Right cardiac atrium (tissue), 5 donors: ENCODE measurements at regions of chr22 and their contacts with region 1.

Region 1: GRCh38 chr22:37519268-37520195 is at the start of gene CARD10:
- DNase-seq: peak in 2 of 3 donors; percentile 75 to 81
- ATAC-seq: peak; percentile 58 to 69
- H3K4me3 ChIP-seq: peak within 1 kb of the TSS; percentile 60
- H3K27ac ChIP-seq: peak within 1 kb of the TSS; percentile 19
- H3K4me1 ChIP-seq: no peaks in the 10 kb centered on the region
- H3K27me3 ChIP-seq: no peaks in the 10 kb centered on the region
- total RNA-seq, gene CARD10: 6.6 to 11.4 (median 9.6) TPM

Region 2: DNA sequence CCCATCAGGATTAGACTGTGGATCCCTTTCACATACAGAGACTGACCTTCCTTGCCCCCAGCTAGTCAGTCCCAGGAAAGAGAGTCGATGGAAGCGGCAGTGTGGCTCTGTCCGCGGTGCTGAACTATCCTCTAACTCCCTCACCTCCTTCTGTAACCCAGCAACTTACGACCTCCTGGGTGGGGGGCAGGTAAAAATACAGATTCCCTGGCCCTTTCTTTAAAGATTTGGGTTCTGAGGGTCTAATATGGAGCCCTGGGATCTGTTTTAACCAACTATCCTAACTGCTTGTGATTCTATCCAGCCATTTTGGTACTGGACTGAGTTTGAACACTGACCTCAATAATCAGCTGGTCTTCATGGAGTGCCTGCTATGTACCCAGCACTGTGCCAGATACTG is 56.5 kb before region 1 on chr22:
- intact Hi-C with region 1: loop called in 1 of 4 experiments (anchors 10 kb)
- DNase-seq: peak in 1 of 3 donors; percentile 64
- ATAC-seq: peak; percentile 27 to 44
- H3K4me3 ChIP-seq: no peak overlapping the region
- H3K27ac ChIP-seq: no peak overlapping the region
- H3K4me1 ChIP-seq: no peaks in the 10 kb centered on the region
- H3K27me3 ChIP-seq: no peaks in the 10 kb centered on the region

Region 3: DNA sequence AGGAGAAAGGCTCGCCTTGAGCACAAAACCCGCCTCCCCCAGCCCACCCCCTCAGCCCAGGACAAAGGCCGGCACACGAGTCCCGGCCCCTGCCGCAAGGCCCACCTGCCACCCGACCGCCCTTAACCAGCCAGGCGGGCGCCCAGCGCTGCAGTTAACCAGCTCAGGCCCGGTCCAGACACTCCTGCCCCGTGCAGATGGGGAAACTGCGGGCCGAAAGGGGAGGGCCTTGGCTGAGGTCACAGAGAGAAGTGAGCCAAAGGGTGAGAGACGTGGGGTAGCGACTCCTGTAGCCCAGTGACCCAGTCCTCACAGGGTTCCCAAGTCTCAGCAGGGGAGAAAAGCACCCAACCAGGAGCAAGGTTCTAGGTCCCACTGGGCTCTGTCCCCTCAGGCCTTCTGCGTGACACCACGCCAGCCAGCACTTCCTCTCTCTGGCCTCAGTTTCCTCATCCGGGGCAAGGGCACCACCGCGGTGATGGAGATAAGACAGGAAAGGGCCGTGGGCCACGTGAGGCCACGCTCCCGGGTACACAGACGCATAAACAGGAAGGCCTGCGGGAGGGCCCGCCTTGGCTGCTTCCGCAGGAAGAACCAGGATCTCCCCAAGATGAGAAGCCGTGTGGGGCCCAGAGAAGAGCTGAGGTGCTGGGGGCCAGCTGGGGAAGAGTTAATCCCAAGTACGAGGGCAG is 35.3 kb before region 1 on chr22:
- intact Hi-C with region 1: loop called in 1 of 4 experiments (anchors 2 kb)
- DNase-seq: peak; percentile 81 to 93 (median 89)
- ATAC-seq: peak; percentile 64 to 68
- H3K4me3 ChIP-seq: peak overlapping the region; percentile 5
- H3K27ac ChIP-seq: peak overlapping the region; percentile 51
- H3K4me1 ChIP-seq: peaks cover 2% of the 10 kb centered on the region
- H3K27me3 ChIP-seq: no peaks in the 10 kb centered on the region

Region 4: GRCh38 chr22:37566903-37567820 is 47.6 kb after region 1 on chr22:
- intact Hi-C with region 1: no loop called
- DNase-seq: peak; percentile 75 to 93 (median 93)
- ATAC-seq: peak; percentile 33 to 50
- H3K4me3 ChIP-seq: no peak overlapping the region
- H3K27ac ChIP-seq: peak overlapping the region; percentile 7
- H3K4me1 ChIP-seq: peaks cover 11% of the 10 kb centered on the region
- H3K27me3 ChIP-seq: no peaks in the 10 kb centered on the region